CD4-positive, alpha-beta T cell (primary cell): ENCODE measurements at regions of chr4 and their contacts with region 1.

Region 1: DNA sequence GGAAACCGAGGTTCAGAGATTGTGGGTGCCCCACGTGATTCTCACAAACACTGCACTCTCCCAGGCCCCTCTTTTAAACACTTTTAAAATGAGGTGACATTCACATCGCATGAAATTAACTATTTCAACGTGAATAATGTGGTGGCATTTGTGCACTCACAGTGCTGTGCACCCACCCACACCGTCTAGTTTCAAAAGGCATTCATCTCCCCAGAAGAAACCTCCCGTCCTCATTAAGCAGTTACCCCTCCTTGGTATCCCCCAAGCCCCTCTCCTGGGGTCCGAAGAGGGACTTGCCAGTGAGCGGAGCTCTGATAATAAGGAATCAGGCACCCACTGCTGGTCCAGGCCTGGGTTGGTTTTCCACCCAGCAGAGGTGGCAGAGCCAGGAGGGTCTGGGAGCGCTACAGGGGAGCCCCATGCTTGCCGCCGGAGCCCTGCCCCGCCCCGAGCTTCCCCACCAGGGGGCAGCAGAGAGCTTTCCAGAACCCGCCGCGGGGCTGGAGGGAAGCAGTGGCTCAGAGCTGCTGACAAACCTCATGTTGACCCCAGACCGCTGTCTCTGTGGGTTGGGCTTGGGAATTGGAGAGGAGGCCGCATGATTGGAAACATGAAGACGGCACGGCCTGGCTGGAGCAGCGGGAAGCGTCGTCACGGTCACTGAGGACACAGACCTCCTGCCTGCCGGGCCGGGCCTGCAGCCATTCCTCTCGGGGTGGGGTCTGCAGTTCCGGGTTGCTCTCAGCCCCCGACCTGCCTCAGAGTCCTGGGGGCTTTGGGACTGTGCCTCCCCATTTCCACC is 27.5 kb upstream of the HTRA3 start:
- DNase-seq: peak; percentile 65 to 87 (median 78)
- ATAC-seq: peak; percentile 82
- H3K4me3 ChIP-seq: no peak overlapping the region
- H3K4me3 Mint-ChIP-seq: no peak overlapping the region
- H3K27ac ChIP-seq: no peak overlapping the region
- H3K27ac Mint-ChIP-seq: no peak overlapping the region
- H3K4me1 ChIP-seq: peaks cover 15% of the 10 kb centered on the region
- H3K4me1 Mint-ChIP-seq: no peaks in the 10 kb centered on the region
- H3K27me3 ChIP-seq: no peaks in the 10 kb centered on the region
- H3K27me3 Mint-ChIP-seq: no peaks in the 10 kb centered on the region
- CTCF ChIP-seq: peak; percentile 96

Region 2: DNA sequence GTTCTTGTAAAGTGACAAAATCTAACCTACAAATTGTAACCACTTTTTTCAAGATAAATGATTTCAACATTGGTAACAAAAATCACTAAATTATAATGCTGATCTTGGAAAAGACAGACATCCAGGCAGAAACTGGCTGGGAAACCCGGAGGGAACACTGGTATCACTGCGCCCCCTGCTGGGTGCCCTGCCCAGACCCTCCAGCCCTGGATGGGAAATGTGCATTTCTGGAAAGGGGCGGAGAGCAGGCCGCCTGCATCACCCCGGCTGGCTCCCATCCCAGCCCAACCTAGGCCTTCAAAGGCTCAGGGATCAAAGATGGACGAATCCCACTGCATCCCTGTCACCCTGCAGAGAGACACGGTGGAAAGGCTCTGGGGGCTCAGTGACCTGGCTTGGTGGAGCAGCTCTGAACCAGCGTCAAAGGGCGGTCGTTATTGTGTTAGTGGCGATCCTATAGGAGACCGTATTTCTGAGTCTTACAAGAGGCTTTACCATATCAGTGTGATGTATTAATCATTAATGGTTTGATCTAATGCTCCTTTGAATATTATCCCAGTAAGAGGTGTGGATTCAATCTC is 161.2 kb after region 1 on chr4:
- CTCF ChIA-PET with region 1: no interaction called
- POLR2A ChIA-PET with region 1: no interaction called
- intact Hi-C with region 1: loop called in 1 of 2 experiments (anchors 1 kb)
- DNase-seq: peak in 13 of 14 experiments; percentile 20 to 71 (median 41)
- ATAC-seq: peak; percentile 46
- H3K4me3 ChIP-seq: no peak overlapping the region
- H3K4me3 Mint-ChIP-seq: no peak overlapping the region
- H3K27ac ChIP-seq: no peak overlapping the region
- H3K27ac Mint-ChIP-seq: no peak overlapping the region
- H3K4me1 ChIP-seq: no peaks in the 10 kb centered on the region
- H3K4me1 Mint-ChIP-seq: no peaks in the 10 kb centered on the region
- H3K27me3 ChIP-seq: no peaks in the 10 kb centered on the region
- H3K27me3 Mint-ChIP-seq: no peaks in the 10 kb centered on the region
- CTCF ChIP-seq: peak; percentile 85

Region 3: DNA sequence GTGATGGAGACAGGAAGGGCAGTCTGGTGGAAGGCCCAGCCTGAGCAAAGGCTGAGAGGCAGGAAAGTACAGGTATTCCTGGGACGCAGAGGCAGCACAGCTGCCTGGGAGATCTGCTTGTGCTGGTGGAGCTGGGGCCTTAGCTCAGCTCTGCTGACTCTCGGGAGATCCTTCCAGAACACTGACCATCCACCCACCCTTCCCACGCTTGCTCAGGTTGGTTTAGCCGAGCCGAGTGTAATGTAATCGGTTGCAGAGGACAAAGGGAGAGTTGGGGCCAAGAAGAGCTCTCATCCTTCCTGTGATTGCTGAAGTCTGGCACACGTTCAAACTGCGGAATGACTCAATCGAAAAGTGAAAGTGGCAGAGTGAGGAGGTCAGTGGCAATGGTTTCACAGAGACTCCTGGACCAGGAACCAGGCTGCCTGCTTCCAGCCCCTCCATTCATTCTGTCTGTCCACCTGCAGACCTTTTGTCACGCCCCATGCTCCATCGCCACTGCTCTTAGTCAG is 295.0 kb after region 1 on chr4:
- CTCF ChIA-PET with region 1: no interaction called
- POLR2A ChIA-PET with region 1: no interaction called
- intact Hi-C with region 1: no loop called
- DNase-seq: no peak
- ATAC-seq: no peak
- H3K4me3 ChIP-seq: no peak overlapping the region
- H3K4me3 Mint-ChIP-seq: no peak overlapping the region
- H3K27ac ChIP-seq: no peak overlapping the region
- H3K27ac Mint-ChIP-seq: no peak overlapping the region
- H3K4me1 ChIP-seq: peaks cover 10% of the 10 kb centered on the region
- H3K4me1 Mint-ChIP-seq: peaks cover 10% of the 10 kb centered on the region
- H3K27me3 ChIP-seq: no peaks in the 10 kb centered on the region
- H3K27me3 Mint-ChIP-seq: no peaks in the 10 kb centered on the region
- CTCF ChIP-seq: no peak

Region 4: GRCh38 chr4:8594097-8595038 is 352.3 kb after region 1 on chr4:
- CTCF ChIA-PET with region 1: no interaction called
- POLR2A ChIA-PET with region 1: no interaction called
- intact Hi-C with region 1: loop called in 1 of 2 experiments (anchors 10 kb)
- DNase-seq: peak in 1 of 14 experiments; percentile 14
- ATAC-seq: no peak
- H3K4me3 ChIP-seq: no peak overlapping the region
- H3K4me3 Mint-ChIP-seq: no peak overlapping the region
- H3K27ac ChIP-seq: no peak overlapping the region
- H3K27ac Mint-ChIP-seq: no peak overlapping the region
- H3K4me1 ChIP-seq: no peaks in the 10 kb centered on the region
- H3K4me1 Mint-ChIP-seq: no peaks in the 10 kb centered on the region
- H3K27me3 ChIP-seq: peaks cover 23 to 42% of the 10 kb centered on the region in 2 experiments
- H3K27me3 Mint-ChIP-seq: peaks cover 38% of the 10 kb centered on the region
- CTCF ChIP-seq: no peak

Region 5: GRCh38 chr4:8917868-8918783 is 676.0 kb after region 1 on chr4:
- CTCF ChIA-PET with region 1: no interaction called
- POLR2A ChIA-PET with region 1: no interaction called
- intact Hi-C with region 1: loop called in 1 of 2 experiments (anchors 5 kb)
- DNase-seq: peak in 13 of 14 experiments; percentile 23 to 69 (median 53)
- ATAC-seq: peak; percentile 65
- H3K4me3 ChIP-seq: no peak overlapping the region
- H3K4me3 Mint-ChIP-seq: no peak overlapping the region
- H3K27ac ChIP-seq: no peak overlapping the region
- H3K27ac Mint-ChIP-seq: no peak overlapping the region
- H3K4me1 ChIP-seq: peaks cover 5% of the 10 kb centered on the region
- H3K4me1 Mint-ChIP-seq: no peaks in the 10 kb centered on the region
- H3K27me3 ChIP-seq: peaks cover 6 to 24% of the 10 kb centered on the region in 2 experiments
- H3K27me3 Mint-ChIP-seq: peaks cover 23% of the 10 kb centered on the region
- CTCF ChIP-seq: peak; percentile 57